Caco-2 (cell line): ENCODE measurements at regions of chr7 and their contacts with region 1.

Region 1: GRCh38 chr7:31122649-31123058 is 70.5 kb downstream of the ADCYAP1R1 start:
- DNase-seq: peak; percentile 68 to 70
- H3K4me3 ChIP-seq: no peak overlapping the region
- H3K4me3 Mint-ChIP-seq: no peak overlapping the region
- H3K27ac Mint-ChIP-seq: no peak overlapping the region
- H3K4me1 ChIP-seq: no peaks in the 10 kb centered on the region
- H3K4me1 Mint-ChIP-seq: no peaks in the 10 kb centered on the region
- H3K27me3 ChIP-seq: no peaks in the 10 kb centered on the region
- H3K27me3 Mint-ChIP-seq: peaks cover 7% of the 10 kb centered on the region
- CTCF ChIP-seq: peak; percentile 85 to 87

Region 2: DNA sequence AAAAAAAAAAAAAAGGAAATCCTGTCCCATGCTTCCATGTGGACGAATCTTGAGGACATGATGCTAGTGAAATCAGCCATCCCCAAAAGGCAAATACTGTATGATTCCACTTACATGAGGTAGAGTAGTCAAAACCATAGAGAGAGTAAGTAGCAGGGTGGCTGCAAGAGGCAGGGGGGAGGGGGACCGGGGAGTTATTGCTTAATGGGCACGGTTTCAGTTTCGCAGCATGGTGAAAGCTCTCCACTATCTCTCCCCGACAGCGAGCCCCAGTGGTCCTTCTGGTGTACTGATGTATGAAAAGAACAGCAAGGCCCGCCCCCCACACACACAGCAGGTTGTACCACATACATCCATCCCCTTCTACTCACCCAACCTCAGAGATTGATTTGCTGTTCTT is 676.9 kb before region 1 on chr7:
- CTCF ChIA-PET with region 1: no interaction called
- POLR2A ChIA-PET with region 1: no interaction called
- intact Hi-C with region 1: no loop called
- DNase-seq: peak; percentile 32 to 47
- H3K4me3 ChIP-seq: no peak overlapping the region
- H3K4me3 Mint-ChIP-seq: no peak overlapping the region
- H3K27ac Mint-ChIP-seq: no peak overlapping the region
- H3K4me1 ChIP-seq: no peaks in the 10 kb centered on the region
- H3K4me1 Mint-ChIP-seq: no peaks in the 10 kb centered on the region
- H3K27me3 ChIP-seq: no peaks in the 10 kb centered on the region
- H3K27me3 Mint-ChIP-seq: no peaks in the 10 kb centered on the region
- CTCF ChIP-seq: no peak

Region 3: DNA sequence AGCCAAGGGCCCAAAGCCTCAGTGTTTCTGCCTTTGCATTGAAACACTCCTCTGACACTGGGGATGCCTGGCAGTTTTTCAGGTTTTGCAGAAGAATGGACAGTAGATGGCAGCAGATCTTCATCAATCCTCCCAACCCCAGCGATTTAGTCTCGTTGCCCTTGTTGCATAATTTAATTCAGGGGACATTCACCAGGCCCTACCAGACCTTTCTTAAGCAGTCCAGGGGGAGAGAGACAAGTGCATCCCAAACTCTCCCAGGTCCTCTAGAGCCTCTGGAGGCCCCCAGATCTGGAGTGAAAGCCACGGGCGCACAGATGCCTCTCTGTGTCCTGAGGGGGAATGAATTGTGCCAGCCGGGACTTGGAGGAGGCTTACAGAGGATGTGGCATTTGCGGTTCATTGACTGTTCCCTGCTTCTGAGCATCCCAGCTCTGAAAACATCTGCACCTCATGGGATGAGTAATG is 321.8 kb before region 1 on chr7:
- CTCF ChIA-PET with region 1: interaction called, 8 read pairs
- POLR2A ChIA-PET with region 1: no interaction called
- intact Hi-C with region 1: loop called (anchors 1 kb)
- DNase-seq: peak; percentile 57 to 75
- H3K4me3 ChIP-seq: no peak overlapping the region
- H3K4me3 Mint-ChIP-seq: no peak overlapping the region
- H3K27ac Mint-ChIP-seq: no peak overlapping the region
- H3K4me1 ChIP-seq: peaks cover 33% of the 10 kb centered on the region
- H3K4me1 Mint-ChIP-seq: peaks cover 20% of the 10 kb centered on the region
- H3K27me3 ChIP-seq: no peaks in the 10 kb centered on the region
- H3K27me3 Mint-ChIP-seq: no peaks in the 10 kb centered on the region
- CTCF ChIP-seq: peak; percentile 61 to 74

Region 4: GRCh38 chr7:30938435-30939316 is 184.0 kb before region 1 on chr7:
- CTCF ChIA-PET with region 1: interaction called, 12 read pairs
- POLR2A ChIA-PET with region 1: no interaction called
- intact Hi-C with region 1: no loop called
- DNase-seq: peak; percentile 86 to 90
- H3K4me3 ChIP-seq: no peak overlapping the region
- H3K4me3 Mint-ChIP-seq: no peak overlapping the region
- H3K27ac Mint-ChIP-seq: no peak overlapping the region
- H3K4me1 ChIP-seq: peaks cover 9% of the 10 kb centered on the region
- H3K4me1 Mint-ChIP-seq: peaks cover 17% of the 10 kb centered on the region
- H3K27me3 ChIP-seq: no peaks in the 10 kb centered on the region
- H3K27me3 Mint-ChIP-seq: no peaks in the 10 kb centered on the region
- CTCF ChIP-seq: peak; percentile 93 to 95

Region 5: GRCh38 chr7:30983042-30983913 is 139.4 kb before region 1 on chr7:
- CTCF ChIA-PET with region 1: interaction called, 260 read pairs
- POLR2A ChIA-PET with region 1: interaction called, 3 read pairs
- intact Hi-C with region 1: loop called (anchors 1 kb)
- DNase-seq: peak; percentile 78 to 88
- H3K4me3 ChIP-seq: no peak overlapping the region
- H3K4me3 Mint-ChIP-seq: no peak overlapping the region
- H3K27ac Mint-ChIP-seq: no peak overlapping the region
- H3K4me1 ChIP-seq: no peaks in the 10 kb centered on the region
- H3K4me1 Mint-ChIP-seq: no peaks in the 10 kb centered on the region
- H3K27me3 ChIP-seq: peaks cover 2% of the 10 kb centered on the region; the same call in 1 of the 2 replicates
- H3K27me3 Mint-ChIP-seq: peaks cover 21% of the 10 kb centered on the region
- CTCF ChIP-seq: peak; percentile 92 to 95

Region 6: GRCh38 chr7:30988351-30989000 is 134.2 kb before region 1 on chr7:
- CTCF ChIA-PET with region 1: interaction called, 260 read pairs
- POLR2A ChIA-PET with region 1: interaction called, 3 read pairs
- intact Hi-C with region 1: loop called (anchors 1 kb)
- DNase-seq: peak; percentile 15 to 67
- H3K4me3 ChIP-seq: no peak overlapping the region
- H3K4me3 Mint-ChIP-seq: no peak overlapping the region
- H3K27ac Mint-ChIP-seq: no peak overlapping the region
- H3K4me1 ChIP-seq: no peaks in the 10 kb centered on the region; the same call in 1 of the 2 replicates
- H3K4me1 Mint-ChIP-seq: no peaks in the 10 kb centered on the region
- H3K27me3 ChIP-seq: no peaks in the 10 kb centered on the region
- H3K27me3 Mint-ChIP-seq: peaks cover 8% of the 10 kb centered on the region
- CTCF ChIP-seq: no peak

Region 7: GRCh38 chr7:31134246-31135188 is 11.9 kb after region 1 on chr7:
- CTCF ChIA-PET with region 1: interaction called, 26 read pairs
- POLR2A ChIA-PET with region 1: no interaction called
- intact Hi-C with region 1: no loop called
- DNase-seq: peak; percentile 75 to 78
- H3K4me3 ChIP-seq: no peak overlapping the region
- H3K4me3 Mint-ChIP-seq: no peak overlapping the region
- H3K27ac Mint-ChIP-seq: no peak overlapping the region
- H3K4me1 ChIP-seq: no peaks in the 10 kb centered on the region
- H3K4me1 Mint-ChIP-seq: no peaks in the 10 kb centered on the region
- H3K27me3 ChIP-seq: no peaks in the 10 kb centered on the region
- H3K27me3 Mint-ChIP-seq: peaks cover 3% of the 10 kb centered on the region
- CTCF ChIP-seq: peak; percentile 64 to 76

Region 8: GRCh38 chr7:31160941-31161340 is 38.3 kb after region 1 on chr7:
- CTCF ChIA-PET with region 1: no interaction called
- POLR2A ChIA-PET with region 1: no interaction called
- intact Hi-C with region 1: no loop called
- DNase-seq: no peak
- H3K4me3 ChIP-seq: no peak overlapping the region
- H3K4me3 Mint-ChIP-seq: no peak overlapping the region
- H3K27ac Mint-ChIP-seq: no peak overlapping the region
- H3K4me1 ChIP-seq: no peaks in the 10 kb centered on the region
- H3K4me1 Mint-ChIP-seq: no peaks in the 10 kb centered on the region
- H3K27me3 ChIP-seq: no peaks in the 10 kb centered on the region
- H3K27me3 Mint-ChIP-seq: peaks cover 7% of the 10 kb centered on the region
- CTCF ChIP-seq: no peak

Region 9: GRCh38 chr7:31828520-31828919 is 705.9 kb after region 1 on chr7:
- CTCF ChIA-PET with region 1: no interaction called
- POLR2A ChIA-PET with region 1: no interaction called
- intact Hi-C with region 1: no loop called
- DNase-seq: no peak
- H3K4me3 ChIP-seq: no peak overlapping the region
- H3K4me3 Mint-ChIP-seq: no peak overlapping the region
- H3K27ac Mint-ChIP-seq: no peak overlapping the region
- H3K4me1 ChIP-seq: peaks cover 11% of the 10 kb centered on the region; the same call in 1 of the 2 replicates
- H3K4me1 Mint-ChIP-seq: no peaks in the 10 kb centered on the region
- H3K27me3 ChIP-seq: no peaks in the 10 kb centered on the region
- H3K27me3 Mint-ChIP-seq: peaks cover 13% of the 10 kb centered on the region
- CTCF ChIP-seq: no peak